Gastrocnemius medialis (tissue), 4 donors: ENCODE measurements at regions of chrX and their contacts with region 1.

Region 1: DNA sequence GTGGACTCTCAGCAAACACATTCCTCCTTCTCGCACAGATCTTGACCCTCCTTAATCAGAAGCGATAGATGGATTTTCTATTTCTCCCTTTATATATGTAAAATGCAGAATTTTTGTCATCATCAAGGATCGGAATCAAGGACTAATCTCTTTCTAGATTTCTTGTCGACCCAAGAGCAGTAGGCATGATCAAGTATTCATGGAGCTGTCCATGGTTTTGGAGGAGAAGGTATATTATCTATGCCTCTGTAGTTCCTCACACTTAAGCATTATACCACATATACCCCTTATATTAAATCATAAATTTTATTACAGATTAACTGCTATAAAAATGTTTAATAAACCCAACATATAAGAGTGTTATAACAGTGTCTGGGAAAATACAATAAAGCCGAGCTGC is 886.8 kb downstream of the NLGN4X start:
- DNase-seq: no peak
- ATAC-seq: no peak
- H3K4me3 ChIP-seq: no peak overlapping the region
- H3K27ac ChIP-seq: no peak overlapping the region
- H3K4me1 ChIP-seq: no peaks in the 10 kb centered on the region
- H3K27me3 ChIP-seq: no peaks in the 10 kb centered on the region
- CTCF ChIP-seq: no peak
- POLR2A ChIP-seq: no peak

Region 2: DNA sequence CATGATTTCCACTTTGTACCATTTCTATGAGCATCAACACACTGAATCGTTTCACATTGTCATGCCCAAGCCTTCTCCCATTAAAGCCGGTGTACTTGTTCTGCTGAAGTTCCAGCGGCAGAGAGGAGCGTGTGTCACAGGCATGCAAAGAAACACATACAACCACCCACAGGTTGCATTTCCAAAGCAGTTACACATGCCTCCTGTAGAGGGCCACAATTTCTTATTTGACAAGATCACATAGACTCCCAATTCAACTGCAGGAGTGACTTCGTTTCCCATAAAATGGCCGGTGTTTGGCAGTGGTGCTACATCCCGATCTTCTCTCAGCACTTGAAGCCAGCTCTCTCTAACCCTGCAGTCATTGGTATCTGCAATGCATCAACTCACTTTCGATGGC is 105.8 kb before region 1 on chrX:
- in situ Hi-C with region 1: loop called in 1 of 4 experiments (anchors 25 kb)
- intact Hi-C with region 1: no loop called
- DNase-seq: no peak
- ATAC-seq: no peak
- H3K4me3 ChIP-seq: no peak overlapping the region
- H3K27ac ChIP-seq: no peak overlapping the region
- H3K4me1 ChIP-seq: no peaks in the 10 kb centered on the region
- H3K27me3 ChIP-seq: no peaks in the 10 kb centered on the region
- CTCF ChIP-seq: no peak
- POLR2A ChIP-seq: no peak

Region 3: GRCh38 chrX:5399403-5399802 is 57.5 kb after region 1 on chrX:
- in situ Hi-C with region 1: no loop called
- intact Hi-C with region 1: no loop called
- DNase-seq: no peak
- ATAC-seq: no peak
- H3K4me3 ChIP-seq: no peak overlapping the region
- H3K27ac ChIP-seq: no peak overlapping the region
- H3K4me1 ChIP-seq: no peaks in the 10 kb centered on the region
- H3K27me3 ChIP-seq: no peaks in the 10 kb centered on the region
- CTCF ChIP-seq: no peak
- POLR2A ChIP-seq: no peak

Region 4: GRCh38 chrX:5449323-5449722 is 107.4 kb after region 1 on chrX:
- in situ Hi-C with region 1: no loop called
- intact Hi-C with region 1: no loop called
- DNase-seq: no peak
- ATAC-seq: no peak
- H3K4me3 ChIP-seq: no peak overlapping the region
- H3K27ac ChIP-seq: no peak overlapping the region
- H3K4me1 ChIP-seq: no peaks in the 10 kb centered on the region
- H3K27me3 ChIP-seq: no peaks in the 10 kb centered on the region
- CTCF ChIP-seq: no peak
- POLR2A ChIP-seq: no peak